Activated CD8-positive, alpha-beta T cell treated with anti-CD3 and anti-CD28 coated beads for 36 hours (primary cell): ENCODE measurements at regions of chr2 and their contacts with region 1.

Region 1: DNA sequence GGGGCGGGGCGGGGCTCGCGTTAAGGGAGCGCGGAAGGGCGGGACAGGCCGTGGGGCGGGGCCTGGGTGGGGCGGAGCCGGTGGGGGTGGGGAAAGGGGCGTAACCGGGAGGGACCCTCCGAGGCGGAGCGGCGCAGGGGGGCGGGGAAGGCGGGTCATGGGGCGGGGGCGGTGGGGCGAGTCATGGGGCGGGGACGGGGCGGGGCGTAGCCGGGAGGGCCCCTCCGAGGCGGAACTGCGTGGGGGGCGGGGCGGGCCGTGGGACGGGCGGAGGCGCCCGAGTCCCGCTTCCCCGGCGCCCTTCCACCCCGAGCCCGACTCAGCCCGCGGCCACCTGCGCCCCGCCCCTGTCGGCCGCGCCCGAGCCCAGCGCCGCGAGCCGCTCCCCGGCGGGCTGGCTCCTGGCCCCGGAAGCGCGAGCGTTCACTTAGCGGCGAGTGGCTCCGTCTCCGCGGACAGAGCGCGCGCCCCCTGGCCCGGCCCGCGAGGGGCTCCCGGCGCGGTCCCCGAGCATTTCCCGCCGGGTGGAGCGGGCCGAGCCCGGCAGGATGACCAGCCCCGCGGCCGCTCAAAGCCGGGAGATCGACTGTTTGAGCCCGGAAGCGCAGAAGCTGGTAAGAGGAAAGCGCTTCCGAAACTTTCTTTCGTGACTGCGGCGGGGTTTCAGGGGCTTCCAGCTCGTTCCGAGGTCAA is 64.7 kb downstream of the LRRFIP1 start:
- DNase-seq: peak; percentile 95
- ATAC-seq: peak; percentile 68
- H3K4me3 Mint-ChIP-seq: peak overlapping the region; percentile 98
- H3K27ac Mint-ChIP-seq: peak overlapping the region; percentile 93
- H3K4me1 Mint-ChIP-seq: peaks cover 52% of the 10 kb centered on the region
- H3K27me3 Mint-ChIP-seq: no peaks in the 10 kb centered on the region
- CTCF ChIP-seq: no peak

Region 2: GRCh38 chr2:237434866-237435311 is 257.2 kb before region 1 on chr2:
- CTCF ChIA-PET with region 1: no interaction called
- POLR2A ChIA-PET with region 1: interaction called, 3 read pairs
- intact Hi-C with region 1: loop called (anchors 10 kb)
- DNase-seq: peak; percentile 94
- ATAC-seq: peak; percentile 43
- H3K4me3 Mint-ChIP-seq: peak overlapping the region; percentile 78
- H3K27ac Mint-ChIP-seq: peak overlapping the region; percentile 97
- H3K4me1 Mint-ChIP-seq: peaks cover 86% of the 10 kb centered on the region
- H3K27me3 Mint-ChIP-seq: no peaks in the 10 kb centered on the region
- CTCF ChIP-seq: no peak

Region 3: GRCh38 chr2:237731663-237732062 is 39.6 kb after region 1 on chr2:
- CTCF ChIA-PET with region 1: interaction called, 7 read pairs
- POLR2A ChIA-PET with region 1: interaction called, 20 read pairs
- intact Hi-C with region 1: no loop called
- DNase-seq: peak; percentile 76
- ATAC-seq: peak; percentile 96
- H3K4me3 Mint-ChIP-seq: peak overlapping the region; percentile 26
- H3K27ac Mint-ChIP-seq: peak overlapping the region; percentile 82
- H3K4me1 Mint-ChIP-seq: peaks cover 57% of the 10 kb centered on the region
- H3K27me3 Mint-ChIP-seq: no peaks in the 10 kb centered on the region
- CTCF ChIP-seq: no peak

Region 4: DNA sequence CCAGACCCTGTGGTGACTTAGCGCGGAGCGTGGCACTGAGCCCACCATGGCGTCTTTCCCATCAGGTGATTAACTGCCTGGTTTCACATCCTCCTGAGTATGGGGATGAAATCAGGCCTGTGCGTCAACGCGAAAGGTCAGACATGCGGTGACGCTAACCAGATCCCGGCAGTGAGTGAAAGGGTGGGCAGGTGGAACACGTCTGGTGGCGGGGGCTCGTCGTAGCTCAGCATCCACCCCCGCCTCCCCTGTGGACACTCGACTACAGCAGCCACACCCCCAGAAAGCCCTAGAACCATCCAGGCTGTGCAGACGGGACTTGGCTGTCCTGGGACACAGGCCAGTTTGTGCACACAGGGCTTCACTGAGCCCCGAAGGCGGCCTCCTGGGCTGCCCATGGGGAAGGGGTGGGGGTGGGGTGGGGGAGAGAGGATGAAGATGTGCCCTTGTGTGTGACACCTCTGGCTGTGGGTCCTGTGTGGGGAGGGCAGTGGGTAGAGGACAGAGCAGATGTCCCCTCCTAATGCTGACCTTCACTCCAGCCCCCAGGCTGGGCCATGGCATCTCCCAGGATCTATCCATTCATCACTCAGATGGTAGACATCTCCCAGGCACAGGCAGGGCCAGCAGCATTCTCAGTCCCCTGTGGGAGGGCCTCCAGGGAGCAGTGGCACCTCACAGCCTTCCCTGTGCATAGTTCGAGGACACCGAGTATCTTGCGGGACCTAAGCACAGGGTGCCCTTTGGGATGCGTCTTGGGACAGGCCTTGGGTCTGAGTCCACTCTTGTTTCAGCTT is 194.8 kb after region 1 on chr2:
- CTCF ChIA-PET with region 1: no interaction called
- POLR2A ChIA-PET with region 1: no interaction called
- intact Hi-C with region 1: no loop called
- DNase-seq: no peak
- ATAC-seq: no peak
- H3K4me3 Mint-ChIP-seq: no peak overlapping the region
- H3K27ac Mint-ChIP-seq: no peak overlapping the region
- H3K4me1 Mint-ChIP-seq: peaks cover 10% of the 10 kb centered on the region
- H3K27me3 Mint-ChIP-seq: no peaks in the 10 kb centered on the region
- CTCF ChIP-seq: no peak